Dorsolateral prefrontal cortex (tissue), 120 donors: ENCODE measurements at regions of chr6 and their contacts with region 1.

Region 1: DNA sequence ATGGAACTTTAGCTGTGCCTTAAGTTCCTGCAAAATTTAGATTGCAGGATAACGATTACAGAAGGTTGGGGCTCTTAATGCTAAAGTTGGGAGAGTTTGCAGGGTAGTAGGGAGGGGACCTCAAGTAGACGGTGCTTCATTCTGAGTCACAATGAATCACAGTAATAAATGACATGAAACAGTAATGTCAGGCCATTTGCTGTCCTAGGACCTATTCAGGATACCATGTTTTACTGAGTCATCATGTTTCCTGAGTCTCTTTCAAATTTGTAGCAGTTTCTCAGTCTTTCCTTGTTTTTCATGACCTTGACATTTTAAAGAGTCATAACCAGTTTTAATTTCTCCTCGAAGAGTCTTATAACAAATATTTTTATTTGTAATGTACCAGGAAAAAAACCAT is 406.9 kb upstream of the MAP3K7 start:
- DNase-seq: no peak
- H3K4me3 ChIP-seq: no peak overlapping the region
- H3K27ac ChIP-seq: no peak overlapping the region
- H3K27me3 ChIP-seq: no peaks in the 10 kb centered on the region
- CTCF ChIP-seq: no peak

Region 2: DNA sequence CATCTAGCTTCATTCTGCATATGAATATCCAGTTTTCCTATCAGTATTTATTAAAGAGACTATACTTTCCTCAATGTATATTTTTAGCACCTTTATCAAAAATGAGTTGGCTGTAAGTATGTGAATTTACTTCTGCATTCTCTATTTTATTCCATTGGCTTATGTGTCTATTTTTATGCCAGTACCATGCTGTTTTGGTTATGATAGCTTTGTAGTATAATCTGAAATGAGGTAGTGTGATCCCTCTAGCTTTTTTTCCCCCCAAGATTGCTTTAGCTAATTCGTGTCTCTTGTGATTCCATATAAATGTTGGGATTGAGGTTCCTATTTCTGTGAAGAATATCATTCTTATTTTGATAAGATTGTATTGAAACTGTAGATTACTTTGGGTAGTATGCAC is 62.2 kb after region 1 on chr6:
- intact Hi-C with region 1: loop called in 1 of 2 experiments (anchors 5 kb)
- DNase-seq: no peak
- H3K4me3 ChIP-seq: no peak overlapping the region
- H3K27ac ChIP-seq: no peak overlapping the region
- H3K27me3 ChIP-seq: no peaks in the 10 kb centered on the region
- CTCF ChIP-seq: no peak